Activated CD8-positive, alpha-beta T cell treated with anti-CD3 and anti-CD28 coated beads for 36 hours (primary cell): ENCODE measurements at regions of chr9 and their contacts with region 1.

Region 1: GRCh38 chr9:133184962-133185361 is 21.2 kb upstream of the GBGT1 start:
- DNase-seq: peak; percentile 77
- ATAC-seq: peak; percentile 55
- H3K4me3 Mint-ChIP-seq: peak overlapping the region; percentile 31
- H3K27ac Mint-ChIP-seq: no peak overlapping the region
- H3K4me1 Mint-ChIP-seq: peaks cover 16% of the 10 kb centered on the region
- H3K27me3 Mint-ChIP-seq: peaks cover 30% of the 10 kb centered on the region
- CTCF ChIP-seq: peak; percentile 60

Region 2: DNA sequence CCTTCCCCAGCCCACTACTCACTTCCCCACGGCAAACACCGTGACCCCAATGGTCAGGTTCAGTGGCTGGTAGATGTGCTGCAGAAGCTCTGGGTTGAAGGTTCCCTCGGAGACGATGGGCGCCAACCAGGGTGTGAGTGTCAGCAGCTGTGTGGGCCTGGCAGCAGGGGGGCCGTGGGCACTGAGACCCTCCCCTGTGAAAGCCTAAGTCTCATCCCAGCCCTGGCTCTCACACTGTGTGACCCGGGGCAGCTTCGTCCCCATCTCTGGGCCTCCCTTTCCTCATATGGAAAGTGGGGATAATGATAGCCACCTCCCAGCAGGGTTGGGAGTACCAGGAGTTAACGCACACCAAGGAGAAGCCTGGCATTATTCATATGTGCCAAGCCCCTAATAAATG is 29.8 kb before region 1 on chr9:
- CTCF ChIA-PET with region 1: interaction called, 11 read pairs
- POLR2A ChIA-PET with region 1: no interaction called
- intact Hi-C with region 1: no loop called
- DNase-seq: no peak
- ATAC-seq: no peak
- H3K4me3 Mint-ChIP-seq: no peak overlapping the region
- H3K27ac Mint-ChIP-seq: no peak overlapping the region
- H3K4me1 Mint-ChIP-seq: peaks cover 3% of the 10 kb centered on the region
- H3K27me3 Mint-ChIP-seq: no peaks in the 10 kb centered on the region
- CTCF ChIP-seq: no peak

Region 3: DNA sequence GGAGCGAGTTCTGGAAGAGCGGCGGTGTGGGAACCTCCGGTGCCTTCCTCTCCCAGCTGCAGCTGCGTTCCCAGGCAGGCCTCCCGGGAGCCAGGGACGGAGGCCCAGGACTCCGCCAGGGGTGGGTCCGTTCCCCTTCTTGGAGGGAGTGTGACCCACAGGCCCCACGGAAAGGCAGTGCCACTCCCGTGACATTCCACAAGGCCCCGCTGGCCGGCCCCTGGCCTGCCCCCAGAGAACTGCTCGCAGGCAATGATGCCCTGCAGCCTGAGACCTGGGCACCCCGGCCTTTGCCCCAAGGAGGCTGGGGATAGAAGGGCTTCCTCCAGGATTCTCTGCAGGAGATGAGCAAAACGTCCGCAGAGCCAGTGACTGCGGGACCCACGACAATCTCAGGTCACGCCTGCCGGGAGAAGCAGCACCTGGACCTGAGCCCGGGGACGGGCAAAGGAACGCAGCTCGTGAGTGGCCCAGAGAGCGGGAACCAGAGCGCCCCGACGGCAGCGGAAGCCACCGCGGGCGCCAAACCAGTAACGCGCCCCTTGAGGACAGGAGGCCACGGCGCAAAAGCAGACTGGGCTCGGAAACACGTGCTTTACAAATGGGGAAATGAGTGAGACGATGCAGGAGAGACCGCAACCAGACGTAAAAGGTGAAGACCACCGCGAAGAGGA is 14.8 kb after region 1 on chr9:
- CTCF ChIA-PET with region 1: interaction called, 18 read pairs
- POLR2A ChIA-PET with region 1: no interaction called
- intact Hi-C with region 1: no loop called
- DNase-seq: peak; percentile 68
- ATAC-seq: peak; percentile 92
- H3K4me3 Mint-ChIP-seq: peak overlapping the region; percentile 67
- H3K27ac Mint-ChIP-seq: peak overlapping the region; percentile 63
- H3K4me1 Mint-ChIP-seq: peaks cover 3% of the 10 kb centered on the region
- H3K27me3 Mint-ChIP-seq: peaks cover 13% of the 10 kb centered on the region
- CTCF ChIP-seq: no peak

Region 4: GRCh38 chr9:133327834-133328484 is 143.0 kb after region 1 on chr9:
- CTCF ChIA-PET with region 1: interaction called, 21 read pairs
- POLR2A ChIA-PET with region 1: no interaction called
- intact Hi-C with region 1: loop called (anchors 5 kb)
- DNase-seq: no peak
- ATAC-seq: no peak
- H3K4me3 Mint-ChIP-seq: no peak overlapping the region
- H3K27ac Mint-ChIP-seq: no peak overlapping the region
- H3K4me1 Mint-ChIP-seq: peaks cover 12% of the 10 kb centered on the region
- H3K27me3 Mint-ChIP-seq: no peaks in the 10 kb centered on the region
- CTCF ChIP-seq: no peak

Region 5: DNA sequence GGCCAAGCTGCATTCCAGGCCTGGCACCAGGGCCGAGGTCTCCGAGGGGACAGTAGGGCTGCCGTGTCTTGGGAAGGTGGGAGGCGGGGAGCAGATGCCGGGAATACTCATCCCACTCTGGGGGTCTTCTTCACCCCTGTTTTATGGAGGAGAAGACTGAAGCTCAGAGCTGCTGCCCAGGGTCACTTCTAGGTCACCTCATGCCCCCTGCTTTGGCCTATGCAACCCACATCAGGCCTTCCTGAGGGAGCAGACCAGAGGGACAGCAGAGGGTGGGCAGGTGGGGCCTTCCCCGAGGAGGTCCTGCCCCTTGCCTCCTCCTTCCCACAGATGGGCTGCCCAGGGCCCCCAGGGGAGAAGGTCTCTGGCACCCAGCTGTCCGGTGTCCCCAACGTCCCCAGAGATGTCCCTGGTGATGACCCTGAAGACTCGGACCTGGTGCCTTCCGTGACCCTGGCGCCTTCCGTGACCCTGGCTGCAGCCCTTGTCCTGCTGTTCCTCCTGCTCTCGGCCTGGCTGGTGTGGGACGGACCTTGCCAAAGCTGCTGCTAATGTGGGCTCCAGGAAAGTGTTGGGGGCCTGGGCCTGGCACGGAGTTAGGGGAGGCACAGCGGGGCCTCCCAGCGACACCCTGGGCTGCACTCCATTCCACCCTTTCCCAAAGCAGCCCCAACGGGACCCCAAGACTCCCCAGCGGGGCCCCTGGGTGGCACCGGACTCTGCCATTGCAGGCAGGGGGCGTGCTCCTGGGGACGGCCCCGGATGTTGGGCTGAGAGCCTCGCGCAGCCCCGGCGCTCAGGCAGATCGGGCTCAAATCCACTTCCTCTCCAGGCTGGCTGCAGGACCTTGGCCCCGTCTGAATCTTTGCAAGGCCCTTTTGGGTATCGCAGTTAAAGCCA is 300.6 kb after region 1 on chr9:
- CTCF ChIA-PET with region 1: interaction called, 21 read pairs
- POLR2A ChIA-PET with region 1: no interaction called
- intact Hi-C with region 1: loop called (anchors 10 kb)
- DNase-seq: peak; percentile 55
- ATAC-seq: peak; percentile 77
- H3K4me3 Mint-ChIP-seq: peak overlapping the region; percentile 39
- H3K27ac Mint-ChIP-seq: peak overlapping the region; percentile 55
- H3K4me1 Mint-ChIP-seq: peaks cover 5% of the 10 kb centered on the region
- H3K27me3 Mint-ChIP-seq: no peaks in the 10 kb centered on the region
- CTCF ChIP-seq: no peak